ENCODE measurements at regions of chr2 and their contacts with region 1.

Region 1: DNA sequence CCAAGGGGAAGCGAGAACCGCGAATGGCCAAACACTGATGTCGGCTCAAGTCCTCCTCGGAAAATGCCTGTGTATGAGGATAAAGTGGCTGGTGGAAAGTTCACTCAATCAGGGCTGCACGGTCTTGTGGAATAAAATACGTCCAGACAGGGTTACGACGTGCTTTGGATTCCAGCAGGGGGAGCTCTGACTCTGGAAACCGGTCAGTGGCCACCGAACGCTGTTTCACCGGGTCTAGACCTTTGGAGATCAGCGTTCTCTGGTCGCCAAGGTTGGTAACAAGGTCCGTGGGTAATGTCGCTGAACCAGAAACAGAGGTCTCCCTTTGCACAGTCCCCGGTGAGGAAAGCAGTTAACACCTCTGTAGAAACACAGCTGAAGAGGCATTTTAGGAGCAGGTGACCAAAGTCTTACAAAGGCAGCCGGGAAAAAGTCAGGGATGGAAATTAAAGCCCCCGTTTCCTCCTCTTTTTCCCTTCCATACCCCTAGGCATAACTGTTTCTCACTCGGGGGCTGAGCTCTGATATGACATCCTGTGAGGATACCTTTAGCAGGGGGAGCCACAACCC is 47.8 kb downstream of the CDCA7 start:
- DNase-seq: peak; percentile 48
- ATAC-seq: peak; percentile 79
- H3K4me3 Mint-ChIP-seq: no peak overlapping the region
- H3K27ac Mint-ChIP-seq: no peak overlapping the region
- H3K4me1 Mint-ChIP-seq: peaks cover 4% of the 10 kb centered on the region
- H3K27me3 Mint-ChIP-seq: peaks cover 47% of the 10 kb centered on the region
- CTCF ChIP-seq: no peak

Region 2: DNA sequence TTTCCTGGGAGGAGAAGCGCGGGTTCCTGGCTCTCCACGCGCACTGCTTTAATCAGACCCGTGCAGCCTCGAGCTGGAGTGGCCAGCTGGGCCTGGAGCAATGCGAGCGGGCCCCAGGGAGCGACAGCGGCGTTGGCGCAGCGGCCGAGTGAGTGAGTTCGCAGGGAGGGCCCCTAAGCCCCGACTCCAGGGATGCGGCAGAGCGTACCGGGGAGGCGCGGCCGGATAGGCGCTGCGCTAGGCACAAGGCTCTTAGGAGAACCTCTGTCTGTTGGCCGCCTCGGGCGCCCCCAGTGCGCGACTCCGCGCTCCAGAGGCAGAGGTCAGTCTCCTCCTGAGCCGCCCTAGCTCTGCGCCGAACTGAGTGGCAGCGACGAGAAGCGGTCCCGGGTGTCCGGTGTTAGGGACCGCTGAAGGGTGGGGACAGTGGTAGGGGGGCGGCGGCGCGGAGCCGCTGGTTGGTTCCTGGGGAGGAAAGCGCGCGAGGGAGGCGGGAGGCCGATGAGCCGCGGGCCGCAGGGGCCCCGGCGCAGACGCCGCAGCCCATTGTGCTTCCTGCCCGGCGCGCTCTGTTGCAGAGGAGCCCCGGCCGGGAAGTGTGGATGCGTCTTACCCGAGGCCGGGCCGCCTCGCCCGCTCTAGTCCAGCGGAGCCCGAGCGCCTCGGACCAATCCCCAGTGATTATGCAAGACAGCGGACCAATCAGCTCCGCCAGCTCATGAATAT is 1317.6 kb before region 1 on chr2:
- CTCF ChIA-PET with region 1: no interaction called
- POLR2A ChIA-PET with region 1: no interaction called
- intact Hi-C with region 1: loop called (anchors 2 kb)
- DNase-seq: peak; percentile 46
- ATAC-seq: peak; percentile 43
- H3K4me3 Mint-ChIP-seq: peak overlapping the region; percentile 75
- H3K27ac Mint-ChIP-seq: peak overlapping the region; percentile 79
- H3K4me1 Mint-ChIP-seq: peaks cover 44% of the 10 kb centered on the region
- H3K27me3 Mint-ChIP-seq: peaks cover 75% of the 10 kb centered on the region
- CTCF ChIP-seq: no peak

Region 3: DNA sequence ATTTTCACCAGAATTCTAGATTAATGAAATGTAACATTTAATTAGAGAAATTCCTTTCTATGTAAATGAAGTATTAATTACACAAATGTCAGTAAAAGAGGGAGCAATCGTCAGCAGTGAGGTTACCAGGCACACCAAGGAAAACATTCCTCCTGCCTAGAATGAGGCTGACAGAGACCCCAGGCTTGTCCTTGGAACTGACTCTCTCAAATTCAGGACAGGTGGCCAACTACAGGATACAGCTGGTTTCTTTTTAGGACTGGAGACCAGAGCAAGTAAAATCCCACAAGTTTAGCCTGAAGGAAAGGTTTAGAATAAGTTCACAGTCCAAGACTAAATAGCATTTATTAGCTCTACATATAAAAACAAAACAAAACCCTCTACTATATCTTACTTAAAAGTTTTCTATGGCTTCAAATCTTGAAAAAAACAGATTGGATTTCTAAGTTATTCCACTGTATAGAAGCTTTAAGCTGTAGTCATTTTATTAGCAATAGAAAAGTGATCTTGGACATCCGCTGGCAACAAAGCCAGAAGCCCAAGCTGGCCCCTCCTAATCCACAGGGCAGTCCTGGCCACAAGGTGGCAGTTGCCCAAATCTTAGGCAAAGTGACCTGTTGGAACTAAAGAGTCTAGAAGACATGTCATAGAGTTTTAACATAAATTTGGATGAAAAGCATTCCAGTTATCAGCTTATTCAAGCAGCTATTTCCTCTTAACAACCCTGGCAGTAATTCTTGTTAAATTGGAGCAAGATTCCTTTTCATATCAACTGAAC is 481.7 kb after region 1 on chr2:
- CTCF ChIA-PET with region 1: interaction called, 3 read pairs
- POLR2A ChIA-PET with region 1: no interaction called
- intact Hi-C with region 1: loop called (anchors 5 kb)
- DNase-seq: no peak
- ATAC-seq: peak; percentile 50
- H3K4me3 Mint-ChIP-seq: no peak overlapping the region
- H3K27ac Mint-ChIP-seq: no peak overlapping the region
- H3K4me1 Mint-ChIP-seq: peaks cover 2% of the 10 kb centered on the region
- H3K27me3 Mint-ChIP-seq: peaks cover 11% of the 10 kb centered on the region
- CTCF ChIP-seq: no peak

Region 4: GRCh38 chr2:174078275-174078674 is 675.8 kb after region 1 on chr2:
- CTCF ChIA-PET with region 1: interaction called, 10 read pairs
- POLR2A ChIA-PET with region 1: no interaction called
- intact Hi-C with region 1: loop called (anchors 1 kb)
- DNase-seq: no peak
- ATAC-seq: no peak
- H3K4me3 Mint-ChIP-seq: no peak overlapping the region
- H3K27ac Mint-ChIP-seq: no peak overlapping the region
- H3K4me1 Mint-ChIP-seq: no peaks in the 10 kb centered on the region
- H3K27me3 Mint-ChIP-seq: no peaks in the 10 kb centered on the region
- CTCF ChIP-seq: no peak

Region 5: GRCh38 chr2:174553811-174554493 is 1151.5 kb after region 1 on chr2:
- CTCF ChIA-PET with region 1: no interaction called
- POLR2A ChIA-PET with region 1: no interaction called
- intact Hi-C with region 1: loop called (anchors 10 kb)
- DNase-seq: no peak
- ATAC-seq: peak; percentile 87
- H3K4me3 Mint-ChIP-seq: peak overlapping the region; percentile 40
- H3K27ac Mint-ChIP-seq: peak overlapping the region; percentile 88
- H3K4me1 Mint-ChIP-seq: peaks cover 33% of the 10 kb centered on the region
- H3K27me3 Mint-ChIP-seq: no peaks in the 10 kb centered on the region
- CTCF ChIP-seq: no peak

Measured in activated B cell treated with CpG ODN at 0.5 μM for 24 hours (primary cell).